Lower leg skin (tissue), 4 donors: ENCODE measurements at regions of chr7 and their contacts with region 1.

Region 1: DNA sequence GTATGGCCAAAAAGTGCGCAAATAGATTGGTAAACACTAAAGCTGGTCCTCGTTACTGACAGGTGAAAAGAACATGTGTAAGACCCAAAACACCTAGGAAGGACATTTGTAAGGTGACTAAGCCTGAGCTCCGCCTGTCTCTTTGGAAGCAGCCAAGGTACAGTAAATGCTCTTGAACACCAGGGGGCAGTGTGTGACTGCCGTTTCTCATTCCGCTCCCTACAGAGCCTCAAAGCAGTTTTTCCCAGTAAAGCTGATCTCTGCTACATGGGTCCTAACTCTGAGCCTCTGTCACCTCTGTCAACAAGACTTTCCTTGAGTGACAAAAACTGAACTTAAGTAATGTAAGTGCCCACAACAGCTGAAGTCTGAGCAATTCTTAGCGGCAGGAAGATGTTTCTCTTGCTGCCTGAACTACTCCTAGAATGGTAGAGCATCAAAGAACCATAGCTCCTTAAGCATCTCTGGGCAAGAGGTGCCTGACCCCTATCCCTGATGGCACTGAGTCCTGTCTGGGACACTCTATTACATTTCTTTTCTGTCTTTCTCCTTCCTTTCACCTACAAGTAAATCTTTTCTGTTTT is 238.0 kb upstream of the INHBA start:
- DNase-seq: peak; percentile 66 to 89
- H3K4me3 ChIP-seq: no peak overlapping the region
- CTCF ChIP-seq: peak in 1 of 3 donors; percentile 71
- POLR2A ChIP-seq: no peak

Region 2: GRCh38 chr7:41870461-41871138 is 70.3 kb before region 1 on chr7:
- intact Hi-C with region 1: no loop called
- DNase-seq: no peak
- H3K4me3 ChIP-seq: no peak overlapping the region
- CTCF ChIP-seq: no peak
- POLR2A ChIP-seq: no peak

Region 3: DNA sequence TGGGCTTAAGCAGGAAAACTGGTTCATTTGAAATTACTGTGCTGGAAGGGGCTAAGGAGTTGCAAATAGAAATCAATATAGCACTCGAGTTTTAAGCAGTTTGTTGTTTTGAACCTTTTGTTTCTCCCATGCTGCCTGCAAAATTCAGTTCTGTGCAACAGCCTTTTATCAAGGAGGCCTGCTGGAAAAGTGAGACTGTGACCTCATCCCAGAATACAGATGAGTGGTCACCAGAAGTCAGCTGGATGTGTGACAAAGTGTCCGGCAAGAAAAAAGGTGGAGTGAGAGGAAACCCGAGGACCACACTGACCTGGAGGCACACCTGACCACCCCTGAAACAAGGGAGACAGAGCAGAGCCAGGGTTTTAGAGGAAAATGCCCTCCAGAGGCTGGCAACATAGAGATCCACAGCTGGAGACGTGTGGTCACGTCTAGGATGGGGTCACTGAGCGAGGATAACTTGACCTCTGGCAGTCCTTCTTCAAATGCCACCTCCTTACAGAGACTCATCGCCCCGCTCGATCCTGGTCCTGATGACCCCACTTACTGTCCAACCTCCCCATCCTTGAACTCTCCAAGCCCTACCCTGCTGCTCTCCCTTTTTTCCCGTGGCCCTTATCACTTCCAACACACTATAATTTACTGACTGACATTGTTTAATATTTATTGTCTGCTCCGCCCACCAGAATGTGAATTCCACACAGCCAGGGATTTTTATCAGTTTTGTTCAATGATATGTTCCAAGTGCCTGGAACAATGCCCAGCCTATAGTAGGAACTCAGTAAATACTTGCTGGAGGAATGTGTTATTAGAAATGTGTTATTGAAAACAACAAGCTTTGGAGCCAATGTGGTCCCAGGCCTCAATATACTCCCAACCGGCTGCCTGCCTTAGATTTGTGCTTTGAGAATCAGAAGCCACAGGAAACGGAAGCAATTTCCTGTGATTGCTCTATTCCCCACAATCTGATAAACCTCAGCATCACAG is 52.3 kb after region 1 on chr7:
- intact Hi-C with region 1: loop called (anchors 1 kb)
- DNase-seq: no peak
- H3K4me3 ChIP-seq: no peak overlapping the region
- CTCF ChIP-seq: no peak
- POLR2A ChIP-seq: no peak

Region 4: DNA sequence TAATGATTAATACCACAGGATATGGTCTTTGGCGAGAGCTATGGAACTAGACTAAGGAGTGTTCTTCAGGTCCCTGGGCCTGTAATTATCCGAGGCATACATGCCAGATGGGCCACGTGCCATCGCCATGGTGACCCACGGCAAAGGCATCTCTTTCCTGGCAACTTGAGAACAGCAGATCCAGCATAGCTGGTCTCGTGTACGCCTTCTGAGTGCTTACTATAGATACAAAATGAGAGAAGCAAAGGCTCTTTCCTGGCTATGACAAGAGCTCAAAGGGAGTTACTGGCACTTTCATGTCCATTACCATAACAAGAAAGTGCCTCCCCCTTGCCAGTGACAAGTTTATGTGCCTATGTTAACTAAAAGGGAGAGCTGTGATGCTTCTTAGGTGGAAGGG is 322.1 kb after region 1 on chr7:
- intact Hi-C with region 1: no loop called
- DNase-seq: peak; percentile 66 to 90
- H3K4me3 ChIP-seq: no peak overlapping the region
- CTCF ChIP-seq: no peak
- POLR2A ChIP-seq: no peak

Region 5: DNA sequence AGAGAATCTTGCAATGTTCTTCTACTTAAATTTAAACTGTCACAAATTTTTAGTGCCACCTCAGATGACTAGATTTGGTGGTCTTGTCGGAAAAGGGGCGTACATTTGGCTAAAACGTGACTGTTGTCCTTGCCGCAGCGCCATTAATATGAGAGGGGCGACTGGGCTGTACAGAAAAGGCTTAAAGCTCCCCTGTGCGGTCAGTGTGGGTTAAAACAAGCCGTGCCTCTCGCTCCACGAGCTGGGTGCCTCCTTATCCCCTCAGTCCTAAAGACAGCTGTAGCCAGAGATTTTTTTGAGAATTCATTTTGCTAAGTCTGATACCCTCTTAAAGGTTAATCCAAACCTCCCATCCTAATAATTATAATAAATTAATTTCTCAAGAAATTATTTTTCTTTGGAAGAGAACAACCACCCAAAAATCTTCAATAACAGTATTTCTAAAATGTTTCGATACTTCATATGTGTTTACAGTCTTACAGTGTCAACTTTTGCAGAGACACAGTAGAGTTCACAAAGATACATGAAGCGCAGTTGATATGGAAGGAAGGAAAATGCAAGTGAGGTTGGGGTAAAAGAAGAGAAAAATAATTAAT is 902.5 kb after region 1 on chr7:
- intact Hi-C with region 1: loop called (anchors 5 kb)
- DNase-seq: no peak
- H3K4me3 ChIP-seq: no peak overlapping the region
- CTCF ChIP-seq: no peak
- POLR2A ChIP-seq: no peak